ENCODE measurements at regions of chr9 and their contacts with region 1.

Region 1: DNA sequence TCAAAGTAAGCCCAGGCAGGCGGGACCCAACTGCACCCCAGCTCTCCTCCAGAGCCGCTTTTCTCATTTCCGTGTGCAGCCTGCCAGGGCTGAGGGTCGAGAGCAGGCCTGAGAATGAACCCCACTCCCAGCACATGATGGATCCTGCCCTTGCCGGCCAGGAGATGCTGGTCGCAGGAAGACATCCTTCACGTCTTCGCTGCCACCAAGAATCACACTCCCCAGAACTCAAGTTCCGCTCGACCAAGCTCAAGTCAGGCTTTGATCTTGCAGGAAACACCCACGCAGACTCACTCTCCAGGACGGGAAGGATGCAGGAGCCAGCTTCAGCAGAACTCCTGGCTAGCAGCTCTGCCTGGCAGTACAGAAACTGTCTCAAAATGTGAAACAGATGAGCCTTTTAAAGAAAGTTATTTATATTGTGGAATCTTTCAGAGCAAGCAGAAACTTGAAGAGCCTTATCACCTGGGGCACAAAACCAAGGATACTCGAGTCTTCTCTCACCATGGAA is 102.4 kb downstream of the ROR2 start:
- H3K4me3 Mint-ChIP-seq: peak overlapping the region; percentile 45
- H3K27ac Mint-ChIP-seq: peak overlapping the region; percentile 68
- H3K4me1 Mint-ChIP-seq: peaks cover 52% of the 10 kb centered on the region
- H3K27me3 Mint-ChIP-seq: peaks cover 17% of the 10 kb centered on the region

Region 2: GRCh38 chr9:91905995-91906469 is 58.4 kb after region 1 on chr9:
- intact Hi-C with region 1: loop called (anchors 10 kb)
- H3K4me3 Mint-ChIP-seq: no peak overlapping the region
- H3K27ac Mint-ChIP-seq: no peak overlapping the region
- H3K4me1 Mint-ChIP-seq: peaks cover 20% of the 10 kb centered on the region
- H3K27me3 Mint-ChIP-seq: peaks cover 10% of the 10 kb centered on the region

Region 3: DNA sequence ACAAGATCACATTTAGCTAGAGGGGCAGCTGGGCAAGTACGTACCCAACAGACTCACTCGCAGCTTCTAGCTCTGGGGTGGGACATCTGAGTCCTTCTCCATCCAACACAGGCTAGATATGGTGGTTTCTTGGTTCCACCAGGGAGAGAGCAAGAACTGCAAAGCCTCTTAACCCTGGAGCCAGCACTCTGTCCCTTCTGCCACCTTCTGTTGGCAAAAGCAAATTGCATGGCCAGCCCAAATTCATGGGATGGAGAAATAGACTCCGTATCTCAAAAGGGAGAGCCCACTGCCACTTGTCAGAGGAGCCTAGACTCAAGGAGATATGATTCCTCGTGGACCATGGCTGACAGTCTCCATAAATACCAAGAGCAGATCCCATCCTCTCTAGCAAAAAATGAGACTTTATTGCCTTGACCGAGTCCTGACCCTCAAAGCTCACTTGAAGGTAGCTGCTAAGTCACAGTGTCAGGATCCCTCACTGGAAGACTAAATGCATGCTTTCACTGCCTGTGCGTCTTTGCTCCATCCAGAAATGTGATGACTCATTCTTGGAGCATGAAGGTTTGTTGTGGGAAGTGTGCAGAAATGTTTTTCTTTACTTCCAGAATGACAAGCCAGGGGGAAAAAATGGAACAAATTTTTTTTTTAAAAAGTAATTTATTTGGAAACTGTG is 131.2 kb after region 1 on chr9:
- intact Hi-C with region 1: no loop called
- H3K4me3 Mint-ChIP-seq: no peak overlapping the region
- H3K27ac Mint-ChIP-seq: no peak overlapping the region
- H3K4me1 Mint-ChIP-seq: no peaks in the 10 kb centered on the region
- H3K27me3 Mint-ChIP-seq: peaks cover 5% of the 10 kb centered on the region